ENCODE measurements at regions of chr1 and their contacts with region 1.

Region 1: GRCh38 chr1:48572646-48573261 is 100.8 kb upstream of the SPATA6 start:
- DNase-seq: peak; percentile 49
- ATAC-seq: no peak
- H3K4me3 Mint-ChIP-seq: no peak overlapping the region
- H3K27ac Mint-ChIP-seq: no peak overlapping the region
- H3K4me1 Mint-ChIP-seq: no peaks in the 10 kb centered on the region
- H3K27me3 Mint-ChIP-seq: peaks cover 5% of the 10 kb centered on the region

Region 2: GRCh38 chr1:48697066-48697707 is 124.4 kb after region 1 on chr1:
- CTCF ChIA-PET with region 1: interaction called, 4 read pairs
- POLR2A ChIA-PET with region 1: no interaction called
- intact Hi-C with region 1: loop called in 1 of 2 experiments (anchors 2 kb)
- DNase-seq: peak; percentile 76
- ATAC-seq: no peak
- H3K4me3 Mint-ChIP-seq: no peak overlapping the region
- H3K27ac Mint-ChIP-seq: no peak overlapping the region
- H3K4me1 Mint-ChIP-seq: no peaks in the 10 kb centered on the region
- H3K27me3 Mint-ChIP-seq: peaks cover 7% of the 10 kb centered on the region

Region 3: GRCh38 chr1:48817505-48818114 is 244.9 kb after region 1 on chr1:
- CTCF ChIA-PET with region 1: interaction called, 3 read pairs
- POLR2A ChIA-PET with region 1: no interaction called
- intact Hi-C with region 1: loop called in 1 of 2 experiments (anchors 5 kb)
- DNase-seq: peak; percentile 66
- ATAC-seq: peak; percentile 58
- H3K4me3 Mint-ChIP-seq: no peak overlapping the region
- H3K27ac Mint-ChIP-seq: no peak overlapping the region
- H3K4me1 Mint-ChIP-seq: no peaks in the 10 kb centered on the region
- H3K27me3 Mint-ChIP-seq: peaks cover 6% of the 10 kb centered on the region

Region 4: DNA sequence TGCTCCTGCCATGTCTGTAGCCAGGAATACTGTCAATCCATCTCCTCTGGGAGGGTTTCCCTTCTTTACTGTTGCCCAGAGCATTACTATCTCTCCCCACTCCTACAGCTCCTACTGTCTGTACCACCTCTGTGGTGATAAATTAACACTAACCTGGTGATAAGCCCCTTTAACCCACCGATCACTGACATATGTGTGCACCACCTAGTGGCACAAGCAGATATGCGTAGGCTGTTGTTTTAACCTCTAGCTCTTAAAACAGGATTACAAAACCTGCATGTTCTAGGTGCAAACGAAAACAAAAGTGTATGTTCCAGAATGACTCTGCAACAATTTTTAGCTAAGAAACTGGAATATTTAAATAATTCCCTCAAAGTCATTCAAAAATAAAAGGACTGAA is 297.8 kb after region 1 on chr1:
- CTCF ChIA-PET with region 1: no interaction called
- POLR2A ChIA-PET with region 1: no interaction called
- intact Hi-C with region 1: loop called in 1 of 2 experiments (anchors 1 kb)
- DNase-seq: peak; percentile 20
- ATAC-seq: no peak
- H3K4me3 Mint-ChIP-seq: no peak overlapping the region
- H3K27ac Mint-ChIP-seq: no peak overlapping the region
- H3K4me1 Mint-ChIP-seq: no peaks in the 10 kb centered on the region
- H3K27me3 Mint-ChIP-seq: peaks cover 11% of the 10 kb centered on the region